GM12878 (cell line): ENCODE measurements at regions of chr18 and their contacts with region 1.

Region 1: GRCh38 chr18:63479826-63480225 is 3.1 kb downstream of the SERPINB5 start:
- DNase-seq: no peak
- ATAC-seq: no peak
- H3K4me3 ChIP-seq: no peak overlapping the region
- H3K27ac ChIP-seq: no peak overlapping the region
- H3K4me1 ChIP-seq: no peaks in the 10 kb centered on the region
- H3K27me3 ChIP-seq: peaks cover 2 to 4% of the 10 kb centered on the region in 2 experiments; a peak in 3 of 4 replicates
- CTCF ChIP-seq: no peak
- EP300 ChIP-seq: no peak
- POLR2A ChIP-seq: no peak
- RAD21 ChIP-seq: no peak

Region 2: GRCh38 chr18:63467699-63468098 is 12.1 kb before region 1 on chr18:
- CTCF ChIA-PET with region 1: no interaction called
- POLR2A ChIA-PET with region 1: no interaction called
- RAD21 ChIA-PET with region 1: no interaction called
- SMC1A ChIA-PET with region 1: interaction called, 4 read pairs
- in situ Hi-C with region 1: no loop called
- intact Hi-C with region 1: loop called (anchors 1 kb)
- DNase-seq: no peak
- ATAC-seq: no peak
- H3K4me3 ChIP-seq: no peak overlapping the region
- H3K27ac ChIP-seq: no peak overlapping the region
- H3K4me1 ChIP-seq: no peaks in the 10 kb centered on the region
- H3K27me3 ChIP-seq: peaks cover 0 to 5% of the 10 kb centered on the region in 2 experiments; a peak in 2 of 4 replicates
- CTCF ChIP-seq: no peak
- EP300 ChIP-seq: no peak
- POLR2A ChIP-seq: no peak
- RAD21 ChIP-seq: no peak